ENCODE measurements at regions of chr20 and their contacts with region 1.

Region 1: DNA sequence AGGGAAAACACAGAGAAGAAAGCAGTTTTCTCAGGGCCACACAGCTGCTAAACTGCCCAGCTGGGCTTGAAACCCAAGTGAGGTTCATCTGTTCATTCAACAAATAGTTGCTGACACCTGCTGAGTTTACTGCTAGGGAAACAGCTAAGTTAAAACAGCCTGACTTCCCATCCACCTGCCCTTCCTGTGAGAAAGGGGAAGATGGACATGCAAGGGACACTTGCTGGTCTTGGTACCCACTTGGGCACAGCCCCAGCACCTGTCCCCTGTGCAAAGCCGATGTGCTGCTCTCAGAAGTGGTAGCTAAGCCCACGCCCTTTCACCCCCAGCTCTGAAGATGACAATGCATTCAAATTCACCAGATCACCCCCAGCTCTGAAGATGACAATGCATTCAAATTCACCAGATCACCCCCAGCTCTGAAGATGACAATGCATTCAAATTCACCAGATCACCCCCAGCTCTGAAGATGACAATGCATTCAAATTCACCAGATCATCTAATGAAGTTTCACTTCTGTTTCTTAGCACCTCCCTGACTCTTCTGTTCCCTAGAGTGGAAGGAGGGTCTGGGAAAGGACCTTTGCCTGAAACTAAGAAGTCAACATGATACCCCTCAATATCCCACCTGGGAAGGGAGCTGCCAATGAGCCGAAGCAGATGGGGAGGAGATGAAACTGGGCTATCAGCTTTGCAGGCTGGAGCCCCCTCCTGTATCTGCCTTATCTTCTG is 46.0 kb upstream of the TOP1 start:
- DNase-seq: no peak
- H3K4me3 ChIP-seq: no peak overlapping the region
- H3K27me3 ChIP-seq: no peaks in the 10 kb centered on the region
- CTCF ChIP-seq: no peak

Region 2: GRCh38 chr20:40835321-40835720 is 147.3 kb before region 1 on chr20:
- CTCF ChIA-PET with region 1: no interaction called
- POLR2A ChIA-PET with region 1: no interaction called
- DNase-seq: no peak
- H3K4me3 ChIP-seq: no peak overlapping the region
- H3K27me3 ChIP-seq: no peaks in the 10 kb centered on the region
- CTCF ChIP-seq: no peak

Region 3: GRCh38 chr20:40970201-40970600 is 12.4 kb before region 1 on chr20:
- CTCF ChIA-PET with region 1: interaction called, 14 read pairs
- POLR2A ChIA-PET with region 1: no interaction called
- DNase-seq: no peak
- H3K4me3 ChIP-seq: no peak overlapping the region
- H3K27me3 ChIP-seq: no peaks in the 10 kb centered on the region
- CTCF ChIP-seq: peak; percentile 31